ENCODE measurements at regions of chr6 and their contacts with region 1.

Region 1: DNA sequence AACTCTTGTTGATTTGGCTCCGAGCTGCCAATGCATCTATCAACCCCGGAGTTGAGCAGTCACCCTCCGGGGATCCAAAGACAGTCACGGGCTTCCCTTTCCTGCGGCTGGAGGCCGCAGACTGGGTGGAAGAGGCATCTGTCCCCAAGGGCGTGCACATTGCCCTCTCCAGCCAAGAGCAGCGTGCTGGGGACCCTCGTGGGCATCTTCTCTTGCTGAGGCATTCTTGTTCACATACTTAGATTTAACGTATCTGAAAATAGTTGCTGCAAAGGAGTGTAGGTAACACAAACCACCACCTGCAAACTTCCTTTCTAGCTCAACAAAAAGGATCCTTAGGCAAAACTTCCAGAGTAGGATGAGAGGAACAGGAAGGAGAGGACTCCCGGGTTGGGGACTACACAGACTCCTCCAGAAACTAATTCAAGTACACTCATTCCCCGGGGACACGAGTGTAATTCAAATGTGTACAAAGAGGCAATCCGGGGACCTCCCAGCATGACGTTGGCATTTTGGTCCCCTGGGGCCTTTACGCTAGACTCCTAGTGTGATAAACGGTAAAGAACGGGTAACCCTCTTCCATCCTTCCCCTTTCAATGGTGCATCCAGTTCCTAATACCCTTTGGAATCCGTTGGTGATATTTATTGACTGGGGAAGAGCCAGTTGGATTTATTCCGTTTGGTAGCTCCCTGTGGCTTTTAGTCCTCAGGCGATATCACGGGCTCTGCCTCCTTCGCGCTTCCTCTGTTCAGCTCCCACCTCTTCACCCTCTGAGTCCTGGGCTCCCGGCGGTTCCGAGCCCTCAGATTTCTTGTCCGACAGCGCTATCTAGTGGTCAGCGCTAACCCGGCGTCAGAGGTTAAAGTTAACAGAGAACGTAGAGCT is 2.7 kb upstream of the COL12A1 start:
- DNase-seq: peak in 1 of 2 experiments; percentile 96
- H3K4me3 ChIP-seq: peak overlapping the region; percentile 55 to 77 (median 66); a peak in 7 of 8 replicates
- H3K27ac ChIP-seq: no peak overlapping the region
- H3K4me1 ChIP-seq: peaks cover 5 to 26% (median 12%) of the 10 kb centered on the region in 4 experiments; a peak in 6 of 7 replicates
- H3K27me3 ChIP-seq: peaks cover 34 to 54% (median 51%) of the 10 kb centered on the region in 4 experiments
- CTCF ChIP-seq: peak; percentile 71 to 92 (median 91)
- EP300 ChIP-seq: no peak
- POLR2A ChIP-seq: no peak
- RAD21 ChIP-seq: peak; percentile 97 to 99

Region 2: GRCh38 chr6:73854998-73855718 is 1353.4 kb before region 1 on chr6:
- CTCF ChIA-PET with region 1: interaction called, 43 read pairs
- POLR2A ChIA-PET with region 1: no interaction called
- DNase-seq: no peak
- H3K4me3 ChIP-seq: no peak overlapping the region
- H3K27ac ChIP-seq: no peak overlapping the region
- H3K4me1 ChIP-seq: no peaks in the 10 kb centered on the region
- H3K27me3 ChIP-seq: no peaks in the 10 kb centered on the region
- CTCF ChIP-seq: peak in 2 of 3 experiments; percentile 41 to 51; a peak in 2 of 4 replicates
- EP300 ChIP-seq: no peak
- POLR2A ChIP-seq: no peak
- RAD21 ChIP-seq: peak; percentile 70 to 76

Region 3: GRCh38 chr6:74891349-74891831 is 317.2 kb before region 1 on chr6:
- CTCF ChIA-PET with region 1: interaction called, 10 read pairs
- POLR2A ChIA-PET with region 1: interaction called, 3 read pairs
- DNase-seq: no peak
- H3K4me3 ChIP-seq: no peak overlapping the region
- H3K27ac ChIP-seq: no peak overlapping the region
- H3K4me1 ChIP-seq: no peaks in the 10 kb centered on the region
- H3K27me3 ChIP-seq: no peaks in the 10 kb centered on the region
- CTCF ChIP-seq: no peak
- EP300 ChIP-seq: no peak
- POLR2A ChIP-seq: no peak
- RAD21 ChIP-seq: no peak

Region 4: DNA sequence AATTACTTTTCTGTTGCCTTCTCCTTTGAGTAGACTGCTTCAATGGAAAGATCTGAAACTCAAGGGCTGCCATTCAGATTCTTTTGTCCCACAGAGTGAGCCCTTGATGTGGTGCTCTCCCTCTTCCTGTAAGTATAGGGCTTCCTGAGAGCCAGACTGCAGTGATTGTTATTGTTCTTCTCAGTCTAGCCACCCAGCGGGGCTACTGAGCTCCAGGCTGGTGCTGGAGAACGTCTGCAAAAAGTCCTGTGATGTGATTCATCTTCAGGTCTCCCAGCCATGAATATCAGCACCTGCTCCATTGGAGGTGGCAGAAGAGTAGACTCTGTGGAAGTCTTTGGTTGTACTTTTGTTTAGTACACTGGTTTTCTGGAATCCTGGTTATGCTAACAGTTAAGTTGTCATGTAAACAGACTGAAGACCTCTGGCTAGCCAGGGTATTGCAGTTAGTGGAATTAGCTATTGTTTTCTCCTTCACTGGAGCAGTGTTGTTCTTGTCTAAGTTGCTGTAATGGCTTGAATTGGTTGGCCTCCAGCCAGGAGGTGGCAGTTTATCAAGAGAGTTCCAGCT is 243.6 kb before region 1 on chr6:
- CTCF ChIA-PET with region 1: interaction called, 15 read pairs
- POLR2A ChIA-PET with region 1: no interaction called
- DNase-seq: no peak
- H3K4me3 ChIP-seq: no peak overlapping the region
- H3K27ac ChIP-seq: no peak overlapping the region
- H3K4me1 ChIP-seq: no peaks in the 10 kb centered on the region
- H3K27me3 ChIP-seq: no peaks in the 10 kb centered on the region
- CTCF ChIP-seq: peak in 1 of 3 experiments; percentile 30; a peak in 2 of 4 replicates
- EP300 ChIP-seq: no peak
- POLR2A ChIP-seq: no peak
- RAD21 ChIP-seq: peak in 1 of 2 experiments; percentile 11; a peak in 1 of 4 replicates

Region 5: GRCh38 chr6:75223428-75223827 is 14.9 kb after region 1 on chr6:
- CTCF ChIA-PET with region 1: interaction called, 60 read pairs
- POLR2A ChIA-PET with region 1: no interaction called
- DNase-seq: no peak
- H3K4me3 ChIP-seq: no peak overlapping the region
- H3K27ac ChIP-seq: no peak overlapping the region
- H3K4me1 ChIP-seq: peaks cover 0 to 4% (median 0%) of the 10 kb centered on the region in 4 experiments; a peak in 1 of 7 replicates
- H3K27me3 ChIP-seq: no peaks in the 10 kb centered on the region
- CTCF ChIP-seq: no peak
- EP300 ChIP-seq: no peak
- POLR2A ChIP-seq: no peak
- RAD21 ChIP-seq: no peak